ENCODE measurements at regions of chr20 and their contacts with region 1.

Region 1: DNA sequence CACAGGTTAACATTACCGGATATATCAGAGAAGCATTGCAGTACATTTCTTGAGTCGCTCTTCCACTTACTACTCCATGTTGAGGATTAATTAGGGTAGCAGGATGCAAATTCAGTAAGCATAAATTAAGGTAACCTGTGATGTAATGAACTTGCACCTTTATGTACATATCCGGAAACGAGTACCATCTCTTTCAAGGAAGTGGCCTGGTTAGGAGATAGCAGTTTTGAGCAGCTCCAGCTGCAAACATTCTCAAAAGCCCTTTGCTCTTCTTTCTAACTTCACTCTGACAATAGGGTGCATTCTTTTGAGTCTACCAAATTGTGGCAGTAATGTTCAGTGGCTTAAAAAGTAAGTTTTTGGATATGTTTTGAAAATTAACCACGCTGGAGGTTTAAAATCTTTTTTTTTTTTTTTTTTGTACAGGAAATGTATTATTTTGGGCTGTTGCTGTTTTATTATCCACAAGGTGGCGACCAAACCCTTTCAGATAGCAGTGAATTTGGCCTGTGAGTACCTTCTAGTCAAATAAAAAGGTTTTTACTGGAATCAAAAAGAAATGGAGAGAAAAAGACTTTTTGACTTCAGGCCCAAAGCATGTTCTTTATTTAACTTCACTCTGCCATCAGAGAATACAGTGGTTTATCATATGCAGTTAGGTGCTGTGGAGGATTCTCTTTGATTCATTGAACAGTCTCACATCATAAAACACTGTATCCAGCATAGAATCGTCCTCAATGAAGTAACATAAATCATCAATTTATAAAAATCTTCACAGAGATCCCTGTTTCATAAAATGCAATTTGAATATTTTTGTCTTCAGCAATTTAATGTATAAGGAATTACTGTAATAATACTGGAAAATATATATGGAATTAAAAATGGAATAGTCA is 8.9 kb downstream of the FAM217B start:
- DNase-seq: peak in 2 of 5 donors; percentile 59 to 65
- H3K4me3 ChIP-seq: peak overlapping the region; percentile 18
- H3K4me3 Mint-ChIP-seq: peak overlapping the region; percentile 60 to 88 (median 65)
- H3K27ac ChIP-seq: no peak overlapping the region
- H3K27ac Mint-ChIP-seq: peak overlapping the region; percentile 82 to 95 (median 94)
- H3K4me1 ChIP-seq: peaks cover 8% of the 10 kb centered on the region
- H3K4me1 Mint-ChIP-seq: peaks cover 21 to 37% (median 23%) of the 10 kb centered on the region in 3 donors
- H3K27me3 ChIP-seq: no peaks in the 10 kb centered on the region
- H3K27me3 Mint-ChIP-seq: no peaks in the 10 kb centered on the region

Region 2: GRCh38 chr20:59751056-59751688 is 197.9 kb before region 1 on chr20:
- CTCF ChIA-PET with region 1: no interaction called
- POLR2A ChIA-PET with region 1: no interaction called
- DNase-seq: no peak
- H3K4me3 ChIP-seq: no peak overlapping the region
- H3K4me3 Mint-ChIP-seq: no peak overlapping the region
- H3K27ac ChIP-seq: no peak overlapping the region
- H3K27ac Mint-ChIP-seq: no peak overlapping the region
- H3K4me1 ChIP-seq: no peaks in the 10 kb centered on the region
- H3K4me1 Mint-ChIP-seq: peaks cover 0 to 4% (median 0%) of the 10 kb centered on the region in 3 donors
- H3K27me3 ChIP-seq: no peaks in the 10 kb centered on the region
- H3K27me3 Mint-ChIP-seq: peaks cover 3 to 12% of the 10 kb centered on the region in 2 donors

Region 3: DNA sequence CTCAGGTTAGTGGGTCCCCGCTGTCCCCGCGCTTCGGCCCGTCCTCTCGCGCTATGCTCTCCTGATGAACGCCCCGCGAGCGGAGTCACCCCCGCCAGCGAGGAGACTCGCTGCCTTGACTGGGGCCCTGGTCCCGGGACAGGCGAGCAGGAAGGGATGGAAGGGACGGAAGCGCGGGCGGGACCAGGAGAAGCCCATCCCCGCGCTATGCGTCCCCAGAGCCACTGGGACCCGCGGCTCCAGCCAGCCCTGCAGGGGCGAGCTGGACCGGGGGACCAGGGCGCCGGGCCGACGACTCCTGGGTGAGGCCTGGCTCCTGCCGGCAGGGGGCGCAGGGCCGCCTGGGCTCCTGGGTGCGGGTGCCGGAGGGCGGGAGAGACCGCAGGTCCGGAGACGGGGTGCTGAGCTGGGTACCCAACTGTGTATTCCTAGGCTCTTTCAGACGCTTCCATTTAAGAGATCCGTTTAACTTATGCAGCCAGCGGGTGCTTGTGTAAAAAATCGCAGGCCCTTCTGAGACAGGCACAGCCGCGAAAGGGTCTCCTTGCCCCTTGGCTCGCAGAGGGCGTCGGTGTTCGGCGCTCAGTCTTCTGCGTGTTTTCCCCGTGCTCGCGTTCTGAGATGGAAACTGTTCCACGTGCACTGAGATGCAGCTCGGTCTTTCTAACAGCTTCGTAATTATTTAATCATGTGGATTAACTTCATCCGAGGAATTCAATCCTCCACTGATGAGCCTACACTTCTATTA is 15.1 kb before region 1 on chr20:
- CTCF ChIA-PET with region 1: interaction called, 49 read pairs
- POLR2A ChIA-PET with region 1: interaction called, 3 read pairs
- DNase-seq: peak; percentile 73 to 81 (median 77)
- H3K4me3 ChIP-seq: peak overlapping the region; percentile 63
- H3K4me3 Mint-ChIP-seq: peak overlapping the region; percentile 71 to 95 (median 80)
- H3K27ac ChIP-seq: peak overlapping the region; percentile 55
- H3K27ac Mint-ChIP-seq: peak overlapping the region in 5 of 8 donors; percentile 43 to 77 (median 68)
- H3K4me1 ChIP-seq: peaks cover 19% of the 10 kb centered on the region
- H3K4me1 Mint-ChIP-seq: peaks cover 36 to 51% (median 43%) of the 10 kb centered on the region in 3 donors
- H3K27me3 ChIP-seq: no peaks in the 10 kb centered on the region
- H3K27me3 Mint-ChIP-seq: no peaks in the 10 kb centered on the region